Left colon (tissue), 2 donors: ENCODE measurements at regions of chr3 and their contacts with region 1.

Region 1: GRCh38 chr3:39497753-39498152 is 30.3 kb downstream of the MOBP start:
- DNase-seq: no peak
- ATAC-seq: no peak

Region 2: DNA sequence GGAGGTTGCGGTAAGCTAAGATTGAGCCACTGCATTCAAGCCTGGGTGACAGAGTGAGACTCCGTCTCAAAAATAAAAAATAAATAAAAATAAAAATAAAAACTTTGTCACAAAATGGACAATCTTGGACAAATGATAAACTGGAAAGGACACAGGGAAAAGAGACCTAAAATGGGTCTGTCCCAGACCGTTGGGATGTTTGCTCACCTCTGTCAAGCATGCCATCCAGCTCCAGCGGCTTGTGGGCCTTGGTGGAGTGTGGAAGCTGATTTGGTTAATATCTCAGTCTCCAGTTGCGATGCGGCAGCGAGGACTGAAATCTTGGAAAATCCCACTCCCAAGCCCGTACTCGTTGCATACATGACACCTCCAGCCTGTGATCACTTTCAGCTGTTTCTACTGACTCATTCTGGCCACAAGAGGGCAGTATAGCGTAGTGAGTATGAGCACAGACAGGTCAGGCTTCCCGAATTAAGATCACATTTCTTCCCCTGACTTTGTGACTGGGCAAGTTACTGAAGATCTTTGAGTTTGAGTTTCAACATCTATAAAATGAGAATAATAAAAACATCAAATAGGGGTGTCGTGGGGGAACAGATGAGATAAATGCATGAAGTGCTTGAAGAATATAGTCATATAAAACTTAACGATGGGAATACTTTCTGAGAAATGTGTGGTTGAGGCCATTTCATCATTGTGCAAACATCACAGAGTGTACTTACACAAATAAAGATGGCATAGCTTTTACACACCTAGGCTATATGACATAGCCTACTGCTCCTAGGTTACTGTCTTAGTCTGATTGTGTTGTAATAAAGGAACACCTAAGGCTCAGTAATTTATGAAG is 49.9 kb before region 1 on chr3:
- intact Hi-C with region 1: loop called in 1 of 2 experiments (anchors 1 kb)
- DNase-seq: peak; percentile 76
- ATAC-seq: peak; percentile 85